K562 (cell line): ENCODE measurements at regions of chr3 and their contacts with region 1.

Region 1: GRCh38 chr3:126982471-126983175 is at the start of gene PLXNA1:
- DNase-seq: peak; percentile 84 to 90 (median 85)
- ATAC-seq: peak; percentile 75
- H3K4me3 ChIP-seq: peak within 1 kb of the TSS; percentile 62
- H3K27ac ChIP-seq: peak within 1 kb of the TSS; percentile 86
- H3K4me1 ChIP-seq: peaks cover 21 to 60% of the 10 kb centered on the region in 2 experiments
- H3K27me3 ChIP-seq: no peaks in the 10 kb centered on the region
- CTCF ChIP-seq: peak; percentile 72 to 84 (median 81)
- EP300 ChIP-seq: no peak
- POLR2A ChIP-seq: 0 out of 2 replicates have a peak, but pooled peaks have one; percentile 29
- RAD21 ChIP-seq: peak in 1 of 2 experiments; percentile 51
- polyA plus RNA-seq, gene PLXNA1: 0.23 to 0.35 TPM

Region 2: GRCh38 chr3:125512135-125512920 is 1470.3 kb before region 1 on chr3:
- CTCF ChIA-PET with region 1: no interaction called
- POLR2A ChIA-PET with region 1: no interaction called
- in situ Hi-C with region 1: no loop called
- intact Hi-C with region 1: no loop called
- DNase-seq: peak in 2 of 4 experiments; percentile 8 to 63
- ATAC-seq: peak; percentile 60
- H3K4me3 ChIP-seq: no peak overlapping the region
- H3K27ac ChIP-seq: peak overlapping the region; percentile 52; the same call in 1 of the 3 replicates
- H3K4me1 ChIP-seq: peaks cover 3 to 25% of the 10 kb centered on the region in 2 experiments; a peak in 3 of 5 replicates
- H3K27me3 ChIP-seq: no peaks in the 10 kb centered on the region
- CTCF ChIP-seq: no peak
- EP300 ChIP-seq: no peak
- POLR2A ChIP-seq: no peak
- RAD21 ChIP-seq: no peak

Region 3: GRCh38 chr3:126679318-126679751 is 303.3 kb before region 1 on chr3:
- CTCF ChIA-PET with region 1: interaction called, 3 read pairs
- POLR2A ChIA-PET with region 1: no interaction called
- in situ Hi-C with region 1: no loop called
- intact Hi-C with region 1: loop called (anchors 10 kb)
- DNase-seq: peak; percentile 66 to 77 (median 70)
- ATAC-seq: peak; percentile 97
- H3K4me3 ChIP-seq: no peak overlapping the region
- H3K27ac ChIP-seq: no peak overlapping the region
- H3K4me1 ChIP-seq: peaks cover 0 to 10% of the 10 kb centered on the region in 2 experiments; a peak in 2 of 5 replicates
- H3K27me3 ChIP-seq: peaks cover 0 to 23% of the 10 kb centered on the region in 2 experiments; a peak in 2 of 5 replicates
- CTCF ChIP-seq: peak; percentile 70 to 79 (median 72)
- EP300 ChIP-seq: no peak
- POLR2A ChIP-seq: no peak
- RAD21 ChIP-seq: peak; percentile 69 to 82

Region 4: GRCh38 chr3:126752303-126752842 is 230.2 kb before region 1 on chr3:
- CTCF ChIA-PET with region 1: interaction called, 17 read pairs
- POLR2A ChIA-PET with region 1: interaction called, 4 read pairs
- in situ Hi-C with region 1: loop called (anchors 5 kb)
- intact Hi-C with region 1: loop called (anchors 1 kb)
- DNase-seq: peak; percentile 66 to 76 (median 70)
- ATAC-seq: peak; percentile 100
- H3K4me3 ChIP-seq: no peak overlapping the region
- H3K27ac ChIP-seq: no peak overlapping the region; the same call in 2 of the 3 replicates
- H3K4me1 ChIP-seq: peaks cover 4 to 5% of the 10 kb centered on the region in 2 experiments; a peak in 4 of 5 replicates
- H3K27me3 ChIP-seq: no peaks in the 10 kb centered on the region
- CTCF ChIP-seq: peak; percentile 85 to 86 (median 85)
- EP300 ChIP-seq: no peak
- POLR2A ChIP-seq: no peak
- RAD21 ChIP-seq: peak; percentile 85 to 92

Region 5: GRCh38 chr3:126850370-126851085 is 132.1 kb before region 1 on chr3:
- CTCF ChIA-PET with region 1: no interaction called
- POLR2A ChIA-PET with region 1: interaction called, 4 read pairs
- in situ Hi-C with region 1: no loop called
- intact Hi-C with region 1: loop called (anchors 5 kb)
- DNase-seq: no peak
- ATAC-seq: no peak
- H3K4me3 ChIP-seq: no peak overlapping the region
- H3K27ac ChIP-seq: no peak overlapping the region
- H3K4me1 ChIP-seq: peaks cover 0 to 8% of the 10 kb centered on the region in 2 experiments; a peak in 4 of 5 replicates
- H3K27me3 ChIP-seq: no peaks in the 10 kb centered on the region
- CTCF ChIP-seq: no peak
- EP300 ChIP-seq: no peak
- POLR2A ChIP-seq: no peak
- RAD21 ChIP-seq: no peak

Region 6: DNA sequence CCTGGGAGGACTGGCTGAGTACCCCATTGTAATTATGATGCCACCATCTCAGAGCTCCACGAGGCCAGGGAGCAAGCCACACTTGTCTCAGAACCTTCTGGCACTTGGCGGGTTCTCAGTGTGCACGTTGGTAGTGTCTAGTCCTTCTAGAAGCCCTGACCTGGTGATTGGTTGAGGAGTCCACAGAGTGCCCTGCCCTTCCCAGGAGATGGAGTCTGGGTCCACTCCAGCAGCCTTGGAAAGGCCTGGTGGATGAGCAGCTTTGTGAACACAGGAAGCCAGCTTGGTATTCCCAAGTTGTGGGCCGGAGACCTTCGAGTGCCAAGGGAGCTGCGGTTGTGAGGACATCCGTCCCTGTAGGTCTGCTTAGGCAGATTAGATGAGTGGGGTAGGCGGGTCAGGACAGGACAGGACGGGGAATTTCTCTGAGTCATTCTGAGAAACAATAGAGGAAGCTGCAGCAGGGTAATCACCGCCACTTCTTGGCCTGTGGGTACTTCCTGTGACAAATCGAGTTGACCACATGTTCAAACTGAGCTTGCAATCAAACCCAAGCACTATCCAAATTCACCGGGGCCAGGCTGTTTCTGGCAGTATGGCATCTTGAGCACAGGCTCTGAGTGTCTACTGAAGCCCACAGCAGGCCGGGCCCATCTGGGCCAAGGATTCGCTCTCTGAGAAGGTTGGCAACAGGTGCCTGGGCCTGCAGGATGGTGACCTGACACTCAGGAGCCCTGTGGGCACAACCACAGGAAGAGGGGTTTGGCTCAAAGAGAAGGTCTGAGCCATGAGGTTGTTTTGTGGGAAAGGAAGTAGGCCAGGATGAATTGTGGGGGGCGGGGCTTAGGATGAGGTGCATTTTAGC is 71.2 kb before region 1 on chr3:
- CTCF ChIA-PET with region 1: no interaction called
- POLR2A ChIA-PET with region 1: interaction called, 5 read pairs
- in situ Hi-C with region 1: no loop called
- intact Hi-C with region 1: loop called (anchors 5 kb)
- DNase-seq: peak; percentile 60 to 92 (median 76)
- ATAC-seq: peak; percentile 88
- H3K4me3 ChIP-seq: no peak overlapping the region
- H3K27ac ChIP-seq: peak overlapping the region; percentile 93
- H3K4me1 ChIP-seq: peaks cover 52 to 57% of the 10 kb centered on the region in 2 experiments
- H3K27me3 ChIP-seq: no peaks in the 10 kb centered on the region
- CTCF ChIP-seq: no peak
- EP300 ChIP-seq: peak; percentile 98
- POLR2A ChIP-seq: no peak; the same call in 1 of the 2 replicates
- RAD21 ChIP-seq: peak in 1 of 2 experiments; percentile 31; a peak in 1 of 4 replicates

Region 7: GRCh38 chr3:127518456-127519081 is 535.9 kb after region 1 on chr3:
- CTCF ChIA-PET with region 1: no interaction called
- POLR2A ChIA-PET with region 1: no interaction called
- in situ Hi-C with region 1: no loop called
- intact Hi-C with region 1: no loop called
- DNase-seq: no peak
- ATAC-seq: no peak
- H3K4me3 ChIP-seq: no peak overlapping the region
- H3K27ac ChIP-seq: no peak overlapping the region
- H3K4me1 ChIP-seq: no peaks in the 10 kb centered on the region
- H3K27me3 ChIP-seq: peaks cover 0 to 3% of the 10 kb centered on the region in 2 experiments; a peak in 1 of 5 replicates
- CTCF ChIP-seq: no peak
- EP300 ChIP-seq: no peak
- POLR2A ChIP-seq: no peak
- RAD21 ChIP-seq: no peak